ENCODE measurements at regions of chr7 and their contacts with region 1.

Region 1: DNA sequence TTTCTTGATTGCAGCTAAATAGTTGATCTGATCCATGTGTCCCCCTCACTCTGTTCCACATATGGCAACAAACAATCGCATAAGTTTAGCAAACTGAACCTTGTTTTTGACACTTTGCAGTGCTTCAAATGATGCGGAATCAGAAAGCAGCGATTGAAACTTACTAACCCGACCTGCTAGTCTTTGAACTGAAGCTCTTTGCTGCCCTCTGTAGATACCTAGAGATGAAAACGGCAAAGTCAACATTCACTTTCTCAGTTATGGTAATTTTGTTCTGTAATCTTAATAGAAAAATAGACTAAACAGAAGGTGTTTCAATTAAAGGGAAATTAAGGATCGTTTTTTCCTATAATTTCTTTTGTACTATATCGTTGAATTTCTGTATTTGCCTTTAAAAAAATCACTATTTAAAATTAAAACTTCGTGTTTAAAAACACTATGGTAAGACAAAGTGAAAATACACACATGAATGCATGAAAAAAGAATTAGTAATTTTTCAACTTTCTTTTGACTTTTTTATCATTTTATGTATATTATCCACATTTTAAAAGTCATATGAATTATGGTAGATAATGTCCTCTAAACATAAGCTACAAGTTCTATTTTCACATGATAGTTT is 276.5 kb downstream of the MAGI2 start:
- DNase-seq: peak; percentile 49
- H3K4me3 Mint-ChIP-seq: no peak overlapping the region
- H3K27ac Mint-ChIP-seq: no peak overlapping the region
- H3K4me1 Mint-ChIP-seq: no peaks in the 10 kb centered on the region
- H3K27me3 Mint-ChIP-seq: peaks cover 70% of the 10 kb centered on the region
- CTCF ChIP-seq: peak; percentile 56

Region 2: DNA sequence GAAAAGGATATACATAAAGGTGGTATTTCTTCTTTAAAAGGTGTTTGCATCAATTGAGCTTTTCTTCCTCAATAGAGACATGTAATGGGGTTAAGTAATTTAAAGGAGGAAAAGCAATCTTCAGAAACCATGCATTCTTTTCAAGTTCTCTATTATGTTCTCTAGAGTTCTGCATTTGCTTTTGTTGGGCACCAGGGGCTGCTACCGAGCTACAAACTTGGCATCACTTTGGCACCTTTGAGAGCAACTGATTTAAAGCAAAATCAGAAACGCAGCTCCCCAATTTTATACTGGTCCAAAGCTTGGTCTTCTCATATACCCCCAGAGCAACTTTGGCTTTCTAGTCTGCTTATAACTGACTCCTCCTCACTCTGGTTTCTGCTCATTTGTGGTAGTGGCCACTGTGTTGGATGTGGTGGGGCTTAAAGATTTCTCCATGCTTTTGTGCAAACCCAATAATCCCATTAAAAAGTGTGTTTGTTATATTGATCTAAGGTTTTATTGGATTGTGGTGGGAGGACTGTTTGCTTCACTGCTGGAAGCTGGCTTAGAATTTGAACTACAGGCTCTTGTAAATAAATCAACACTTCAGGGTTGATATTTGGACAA is 666.3 kb before region 1 on chr7:
- CTCF ChIA-PET with region 1: interaction called, 8 read pairs
- POLR2A ChIA-PET with region 1: no interaction called
- intact Hi-C with region 1: loop called (anchors 2 kb)
- DNase-seq: peak; percentile 51
- H3K4me3 Mint-ChIP-seq: no peak overlapping the region
- H3K27ac Mint-ChIP-seq: no peak overlapping the region
- H3K4me1 Mint-ChIP-seq: no peaks in the 10 kb centered on the region
- H3K27me3 Mint-ChIP-seq: peaks cover 55% of the 10 kb centered on the region
- CTCF ChIP-seq: peak; percentile 65

Region 3: DNA sequence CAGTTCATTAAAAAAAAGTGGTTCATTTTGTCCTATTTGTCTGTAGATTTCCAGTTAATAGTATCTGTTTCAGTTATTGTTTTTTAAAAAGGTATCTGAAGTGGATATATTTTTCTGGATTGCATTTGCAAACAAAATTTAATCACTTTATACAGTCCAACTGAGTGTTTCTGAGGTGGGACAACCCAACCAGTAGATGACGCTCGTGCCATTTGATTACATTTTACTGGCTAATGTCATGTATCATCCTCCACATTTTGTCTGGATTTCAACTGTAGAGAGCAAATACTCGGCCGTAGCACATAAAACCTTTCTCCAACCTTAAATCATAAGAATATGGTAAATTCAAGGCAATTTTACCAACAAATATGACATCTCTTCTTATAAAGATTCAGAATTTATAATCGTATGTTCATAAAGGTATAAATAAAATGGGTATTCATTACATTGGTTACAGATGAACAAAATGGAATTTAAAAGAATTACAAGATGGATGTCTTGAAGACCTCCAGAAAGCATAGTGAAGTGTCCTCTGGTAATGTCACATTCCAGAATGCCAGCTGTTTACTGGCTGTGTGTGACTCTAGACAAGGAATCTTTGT is 589.4 kb before region 1 on chr7:
- CTCF ChIA-PET with region 1: interaction called, 5 read pairs
- POLR2A ChIA-PET with region 1: no interaction called
- intact Hi-C with region 1: loop called (anchors 2 kb)
- DNase-seq: peak; percentile 32
- H3K4me3 Mint-ChIP-seq: no peak overlapping the region
- H3K27ac Mint-ChIP-seq: no peak overlapping the region
- H3K4me1 Mint-ChIP-seq: no peaks in the 10 kb centered on the region
- H3K27me3 Mint-ChIP-seq: peaks cover 68% of the 10 kb centered on the region
- CTCF ChIP-seq: peak; percentile 41